ENCODE measurements at regions of chr1 and their contacts with region 1.

Region 1: GRCh38 chr1:229507951-229508822 is at the start of gene NUP133:
- DNase-seq: peak; percentile 96
- H3K4me3 Mint-ChIP-seq: peak within 1 kb of the TSS; percentile 89
- H3K27ac Mint-ChIP-seq: peak within 1 kb of the TSS; percentile 89
- H3K4me1 Mint-ChIP-seq: peaks cover 21% of the 10 kb centered on the region
- H3K27me3 Mint-ChIP-seq: no peaks in the 10 kb centered on the region
- total RNA-seq, gene NUP133: 49.2 and 50.1 TPM in 2 replicates

Region 2: GRCh38 chr1:229558571-229559335 is 50.6 kb after region 1 on chr1 and contains the start of gene ABCB10:
- intact Hi-C with region 1: loop called (anchors 1 kb)
- DNase-seq: peak; percentile 82
- H3K4me3 Mint-ChIP-seq: peak within 1 kb of the TSS; percentile 87
- H3K27ac Mint-ChIP-seq: peak within 1 kb of the TSS; percentile 80
- H3K4me1 Mint-ChIP-seq: peaks cover 34% of the 10 kb centered on the region
- H3K27me3 Mint-ChIP-seq: no peaks in the 10 kb centered on the region
- total RNA-seq, gene ABCB10: 40.1 and 42.7 TPM in 2 replicates